Psoas muscle (tissue), 8 donors: ENCODE measurements at regions of chr14 and their contacts with region 1.

Region 1: DNA sequence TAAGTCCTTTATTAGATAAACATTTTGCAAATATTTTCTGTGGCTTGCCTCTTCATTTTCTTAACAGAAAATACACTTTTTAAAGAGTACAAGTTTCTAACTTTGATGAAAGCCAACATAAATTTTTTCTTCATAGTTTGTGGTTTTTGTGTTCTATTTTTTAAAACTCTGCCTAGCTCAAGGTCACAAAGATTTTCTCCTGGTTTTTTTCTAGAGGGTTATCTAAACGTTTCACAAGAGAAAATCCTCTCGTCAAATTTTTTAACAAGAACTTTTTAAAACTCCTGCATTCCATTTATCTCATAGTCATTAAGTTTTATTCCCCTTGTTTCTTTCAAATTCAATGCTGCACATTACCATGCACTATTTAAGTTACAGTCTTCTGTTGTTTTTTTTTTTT is 8.2 kb downstream of the AREL1 start:
- DNase-seq: no peak
- ATAC-seq: no peak
- H3K4me3 ChIP-seq: no peak overlapping the region
- H3K27ac ChIP-seq: no peak overlapping the region
- H3K4me1 ChIP-seq: peaks cover 9% of the 10 kb centered on the region
- H3K27me3 ChIP-seq: no peaks in the 10 kb centered on the region
- CTCF ChIP-seq: no peak

Region 2: GRCh38 chr14:74667758-74668157 is 36.9 kb before region 1 on chr14:
- intact Hi-C with region 1: loop called in 1 of 2 experiments (anchors 5 kb)
- DNase-seq: no peak
- ATAC-seq: no peak
- H3K4me3 ChIP-seq: no peak overlapping the region
- H3K27ac ChIP-seq: no peak overlapping the region
- H3K4me1 ChIP-seq: peaks cover 29% of the 10 kb centered on the region
- H3K27me3 ChIP-seq: no peaks in the 10 kb centered on the region
- CTCF ChIP-seq: no peak